ENCODE measurements at regions of chr5 and their contacts with region 1.

Region 1: GRCh38 chr5:57779383-57780223 is 297.0 kb upstream of the ACTBL2 start:
- DNase-seq: peak in 2 of 5 donors; percentile 41 to 43
- ATAC-seq: peak; percentile 78 to 88 (median 84)
- H3K4me3 ChIP-seq: peak overlapping the region in 3 of 12 donors; percentile 1 to 8 (median 7)
- H3K27ac ChIP-seq: peak overlapping the region in 11 of 12 donors; percentile 2 to 73 (median 50)
- H3K4me1 ChIP-seq: peaks cover 5 to 40% (median 17%) of the 10 kb centered on the region in 12 donors
- H3K27me3 ChIP-seq: no peaks in the 10 kb centered on the region
- CTCF ChIP-seq: peak; percentile 46 to 82 (median 71)
- POLR2A ChIP-seq: no peak

Region 2: DNA sequence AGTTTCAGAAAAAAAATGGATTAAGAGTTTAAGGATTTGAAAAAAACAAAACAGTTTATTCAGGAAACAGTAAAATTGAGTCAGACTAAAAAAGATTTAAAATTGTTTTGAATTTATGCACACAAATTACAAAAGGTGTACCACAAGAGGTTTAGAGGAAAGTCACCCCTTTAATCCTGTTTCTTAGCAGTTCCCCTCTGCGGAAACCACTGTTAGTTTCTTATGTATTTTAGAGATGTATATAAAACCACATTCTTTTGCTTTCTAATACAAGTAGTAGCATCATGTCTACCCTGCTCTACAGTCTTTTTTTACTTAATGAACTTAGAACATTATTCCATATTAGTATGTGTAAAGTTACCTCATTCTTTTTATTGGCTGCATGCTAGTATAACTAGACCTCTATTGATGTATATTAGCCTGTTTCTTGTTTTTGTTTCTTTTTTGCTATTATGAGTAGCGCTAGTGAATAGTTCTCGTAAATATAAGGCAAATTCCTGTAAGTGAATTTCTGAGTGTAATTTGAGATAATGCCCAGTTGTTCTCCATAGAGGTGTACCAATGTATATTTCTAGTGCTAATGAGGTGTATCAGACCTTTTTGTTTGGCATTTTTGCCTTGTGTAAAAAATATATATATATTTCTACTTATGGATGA is 585.7 kb before region 1 on chr5:
- intact Hi-C with region 1: no loop called
- DNase-seq: no peak
- ATAC-seq: no peak
- H3K4me3 ChIP-seq: no peak overlapping the region
- H3K27ac ChIP-seq: no peak overlapping the region
- H3K4me1 ChIP-seq: peaks cover 0 to 18% (median 13%) of the 10 kb centered on the region in 12 donors
- H3K27me3 ChIP-seq: no peaks in the 10 kb centered on the region
- CTCF ChIP-seq: no peak
- POLR2A ChIP-seq: no peak

Region 3: GRCh38 chr5:57298295-57298984 is 481.2 kb before region 1 on chr5:
- intact Hi-C with region 1: loop called (anchors 2 to 5 kb)
- DNase-seq: peak in 4 of 5 donors; percentile 78 to 86 (median 85)
- ATAC-seq: peak; percentile 82 to 95 (median 89)
- H3K4me3 ChIP-seq: peak overlapping the region in 8 of 12 donors; percentile 0 to 44 (median 26)
- H3K27ac ChIP-seq: peak overlapping the region in 5 of 12 donors; percentile 18 to 62 (median 37)
- H3K4me1 ChIP-seq: peaks cover 0 to 15% (median 8%) of the 10 kb centered on the region in 12 donors
- H3K27me3 ChIP-seq: no peaks in the 10 kb centered on the region
- CTCF ChIP-seq: peak; percentile 72 to 92 (median 82)
- POLR2A ChIP-seq: no peak

Region 4: DNA sequence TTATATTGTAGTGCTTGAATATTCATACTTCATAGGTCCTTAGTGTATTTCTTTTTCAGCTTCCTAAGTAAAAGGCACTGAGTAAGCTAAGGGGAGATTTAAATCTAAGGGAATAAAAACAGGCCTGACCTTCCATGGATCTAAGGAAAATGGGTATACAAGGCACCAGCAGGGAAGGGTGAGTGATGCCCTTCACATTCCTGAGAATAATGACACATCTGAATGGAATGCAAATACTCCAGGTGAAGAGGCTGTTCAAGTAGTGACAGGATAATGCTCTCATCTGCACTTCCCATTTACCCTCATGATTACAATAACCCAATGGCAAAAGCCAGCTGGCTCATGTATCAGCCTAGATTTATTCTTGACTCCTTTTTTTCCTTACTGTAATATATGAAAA is 80.8 kb before region 1 on chr5:
- intact Hi-C with region 1: loop called in 1 of 10 experiments (anchors 5 kb)
- DNase-seq: no peak
- ATAC-seq: no peak
- H3K4me3 ChIP-seq: no peak overlapping the region
- H3K27ac ChIP-seq: peak overlapping the region in 11 of 12 donors; percentile 19 to 88 (median 76)
- H3K4me1 ChIP-seq: peaks cover 2 to 55% (median 30%) of the 10 kb centered on the region in 12 donors
- H3K27me3 ChIP-seq: no peaks in the 10 kb centered on the region
- CTCF ChIP-seq: no peak
- POLR2A ChIP-seq: no peak

Region 5: DNA sequence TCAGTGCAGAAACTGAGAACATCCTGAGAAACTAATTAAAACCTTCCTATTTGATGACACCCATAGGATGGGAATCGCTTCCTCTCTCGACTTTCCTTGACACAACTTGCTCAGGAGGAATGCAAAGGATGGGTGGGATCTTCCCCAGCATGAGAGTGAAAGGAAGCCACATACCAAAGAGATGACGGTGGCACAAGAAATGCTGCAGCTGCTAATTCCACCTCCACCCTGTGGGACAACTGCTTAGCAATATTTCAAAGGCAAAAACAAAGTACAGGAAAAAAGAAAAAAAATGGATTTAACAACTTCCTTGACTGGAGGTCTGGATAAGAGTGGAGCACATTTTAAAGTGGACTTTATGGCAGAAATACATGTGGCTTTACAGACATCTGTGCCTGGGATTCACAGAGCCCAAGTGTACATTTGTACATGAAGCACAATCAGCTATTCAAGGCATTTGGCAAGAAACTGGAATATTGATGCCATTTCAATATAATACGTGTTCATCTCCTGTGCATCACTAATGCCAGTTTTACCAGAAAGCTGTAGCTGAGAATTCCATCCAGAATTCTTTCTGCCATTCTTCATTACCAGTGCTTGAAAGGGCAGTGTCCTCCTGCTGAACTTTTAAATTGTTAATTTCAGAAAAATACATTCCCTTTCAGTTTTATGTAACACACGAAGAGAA is 62.2 kb after region 1 on chr5:
- intact Hi-C with region 1: loop called in 3 of 10 experiments (anchors 5 kb)
- DNase-seq: peak in 3 of 5 donors; percentile 25 to 32 (median 28)
- ATAC-seq: peak in 3 of 4 donors; percentile 61 to 85 (median 76)
- H3K4me3 ChIP-seq: no peak overlapping the region
- H3K27ac ChIP-seq: peak overlapping the region in 8 of 12 donors; percentile 8 to 56 (median 36)
- H3K4me1 ChIP-seq: peaks cover 0 to 38% (median 18%) of the 10 kb centered on the region in 12 donors
- H3K27me3 ChIP-seq: no peaks in the 10 kb centered on the region
- CTCF ChIP-seq: no peak
- POLR2A ChIP-seq: no peak

Region 6: GRCh38 chr5:57887851-57888621 is 108.4 kb after region 1 on chr5:
- intact Hi-C with region 1: loop called in 9 of 10 experiments (anchors 2 to 5 kb)
- DNase-seq: peak in 4 of 5 donors; percentile 47 to 64 (median 60)
- ATAC-seq: peak; percentile 76 to 96 (median 93)
- H3K4me3 ChIP-seq: no peak overlapping the region
- H3K27ac ChIP-seq: peak overlapping the region in 2 of 12 donors; percentile 1 to 32
- H3K4me1 ChIP-seq: peaks cover 0 to 19% (median 6%) of the 10 kb centered on the region in 12 donors
- H3K27me3 ChIP-seq: no peaks in the 10 kb centered on the region
- CTCF ChIP-seq: peak; percentile 39 to 82 (median 66)
- POLR2A ChIP-seq: no peak

Region 7: GRCh38 chr5:58042995-58043945 is 263.7 kb after region 1 on chr5:
- intact Hi-C with region 1: no loop called
- DNase-seq: no peak
- ATAC-seq: no peak
- H3K4me3 ChIP-seq: no peak overlapping the region
- H3K27ac ChIP-seq: peak overlapping the region in 7 of 12 donors; percentile 9 to 35 (median 19)
- H3K4me1 ChIP-seq: peaks cover 0 to 16% (median 0%) of the 10 kb centered on the region in 12 donors
- H3K27me3 ChIP-seq: no peaks in the 10 kb centered on the region
- CTCF ChIP-seq: no peak
- POLR2A ChIP-seq: no peak

Measured in heart left ventricle (tissue), 16 donors.